ENCODE measurements at regions of chr9 and their contacts with region 1.

Region 1: GRCh38 chr9:19925817-19926503 is 137.1 kb upstream of the SLC24A2 start:
- H3K4me3 ChIP-seq: peak overlapping the region; percentile 28
- H3K27ac ChIP-seq: no peak overlapping the region
- H3K4me1 ChIP-seq: no peaks in the 10 kb centered on the region
- CTCF ChIP-seq: peak; percentile 88

Region 2: DNA sequence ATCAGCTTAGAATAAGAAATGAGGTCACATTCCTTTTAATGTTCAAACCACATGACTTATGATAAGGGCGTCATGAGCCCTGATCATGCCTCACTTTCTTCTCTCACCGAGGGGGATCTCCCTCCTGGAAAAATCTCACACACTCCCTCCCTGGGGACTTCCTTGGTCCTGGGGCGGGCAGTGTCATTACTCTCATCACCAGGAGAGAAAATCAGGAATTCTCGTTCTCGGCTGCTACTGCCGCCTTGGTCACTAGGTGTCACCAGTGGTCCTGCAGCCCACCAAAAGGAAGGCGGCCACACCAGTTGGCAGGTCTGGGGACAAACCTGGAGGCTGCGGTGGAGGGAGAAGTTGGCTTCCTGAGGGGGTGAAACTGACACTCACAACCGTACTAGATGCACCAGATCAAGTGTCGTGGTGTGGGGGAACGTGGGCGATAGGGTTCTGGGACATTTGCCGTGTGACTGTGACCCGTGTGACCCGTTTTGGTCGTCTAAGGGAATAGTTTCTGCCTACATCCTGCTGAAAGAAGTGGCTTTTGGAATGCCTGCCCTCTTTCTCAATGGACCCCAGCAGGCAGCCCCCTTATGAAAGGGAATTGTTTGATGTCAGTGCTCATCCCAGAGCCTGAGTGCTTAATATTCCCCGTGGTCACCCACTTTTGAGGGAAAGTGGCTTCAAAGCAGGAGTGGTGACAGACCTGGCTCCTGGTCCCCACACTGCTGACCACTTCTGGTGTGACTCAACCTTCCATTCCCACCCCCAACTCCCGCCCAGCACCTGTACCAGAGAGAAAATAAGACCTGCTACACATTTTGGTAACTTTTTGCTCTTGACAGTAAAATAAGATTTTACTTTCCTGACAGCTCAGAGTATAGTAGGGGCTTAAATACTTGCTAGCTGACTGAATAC is 454.0 kb before region 1 on chr9:
- CTCF ChIA-PET with region 1: interaction called, 39 read pairs
- POLR2A ChIA-PET with region 1: no interaction called
- H3K4me3 ChIP-seq: no peak overlapping the region; the same call in 1 of the 2 replicates
- H3K27ac ChIP-seq: no peak overlapping the region
- H3K4me1 ChIP-seq: no peaks in the 10 kb centered on the region
- CTCF ChIP-seq: peak; percentile 76

Region 3: DNA sequence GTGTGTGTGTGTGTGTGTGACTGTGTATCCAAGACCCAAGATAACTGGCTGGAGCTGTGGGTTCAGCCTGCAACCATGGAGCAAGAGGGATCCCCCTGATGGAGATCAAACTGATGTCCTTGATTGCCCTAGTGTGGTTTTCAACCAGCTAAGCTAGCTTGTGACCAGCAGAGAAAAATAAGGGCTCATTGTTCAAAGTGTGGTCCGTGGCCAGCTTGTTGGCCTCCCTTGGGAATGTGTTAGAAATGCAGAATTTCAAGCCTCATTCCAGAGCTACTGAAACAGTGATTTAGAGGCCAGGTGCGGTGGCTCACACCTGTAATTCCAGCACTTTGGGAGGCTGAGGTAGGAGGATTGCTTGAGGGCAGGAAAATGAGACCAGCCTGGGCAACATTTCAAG is 437.2 kb before region 1 on chr9:
- CTCF ChIA-PET with region 1: interaction called, 16 read pairs
- POLR2A ChIA-PET with region 1: no interaction called
- H3K4me3 ChIP-seq: no peak overlapping the region
- H3K27ac ChIP-seq: no peak overlapping the region
- H3K4me1 ChIP-seq: no peaks in the 10 kb centered on the region
- CTCF ChIP-seq: no peak

Region 4: DNA sequence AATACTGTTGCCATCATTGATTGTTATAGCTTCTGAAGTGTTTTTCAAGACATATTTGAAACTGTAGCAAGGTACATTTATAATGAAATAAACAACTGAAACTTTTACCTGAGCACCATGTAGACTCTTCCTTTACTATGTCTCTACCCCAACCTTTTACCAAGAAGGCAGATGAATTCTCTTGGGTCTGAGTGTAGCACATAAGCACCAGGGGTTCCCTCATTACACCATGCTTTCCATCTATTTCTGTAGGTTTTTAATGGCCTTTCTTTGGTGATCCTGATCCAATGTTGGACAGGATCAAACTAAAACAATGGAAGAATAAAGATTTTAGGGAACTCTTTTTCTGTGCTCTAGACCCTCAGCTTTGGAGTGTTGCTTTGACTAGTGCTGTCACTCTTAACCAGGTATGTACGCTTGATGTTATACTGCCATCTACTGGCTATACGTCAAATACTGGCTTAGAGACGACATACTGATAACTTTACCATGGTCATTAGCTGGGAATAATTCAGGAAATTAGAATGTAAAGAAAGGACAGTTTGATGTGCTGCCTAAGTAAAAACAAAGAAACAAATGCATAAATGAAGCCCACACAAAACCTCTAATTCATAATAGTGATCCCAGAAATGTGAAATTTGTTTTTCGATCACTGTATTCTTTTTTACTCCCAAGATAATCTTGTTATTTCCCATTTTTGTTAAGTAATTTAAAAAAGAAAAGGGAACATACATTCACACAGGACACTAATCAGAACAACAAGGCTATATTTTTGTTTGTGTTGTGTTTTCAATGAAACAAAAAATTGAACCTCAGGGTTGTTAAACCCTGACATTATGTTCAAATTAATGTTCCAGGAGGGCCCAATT is 1185.0 kb after region 1 on chr9:
- CTCF ChIA-PET with region 1: interaction called, 14 read pairs
- POLR2A ChIA-PET with region 1: no interaction called
- H3K4me3 ChIP-seq: no peak overlapping the region
- H3K27ac ChIP-seq: no peak overlapping the region
- H3K4me1 ChIP-seq: no peaks in the 10 kb centered on the region
- CTCF ChIP-seq: peak; percentile 65

Measured in HEK293 (cell line).